Naive thymus-derived CD4-positive, alpha-beta T cell (primary cell): ENCODE measurements at regions of chr10 and their contacts with region 1.

Region 1: GRCh38 chr10:94439275-94439861 is 37.0 kb downstream of the TBC1D12 start:
- DNase-seq: no peak
- ATAC-seq: no peak
- H3K4me3 ChIP-seq: no peak overlapping the region
- H3K4me3 Mint-ChIP-seq: no peak overlapping the region
- H3K27ac ChIP-seq: no peak overlapping the region
- H3K27ac Mint-ChIP-seq: no peak overlapping the region
- H3K4me1 ChIP-seq: no peaks in the 10 kb centered on the region
- H3K4me1 Mint-ChIP-seq: no peaks in the 10 kb centered on the region
- H3K27me3 ChIP-seq: peaks cover 0 to 3% of the 10 kb centered on the region in 2 donors
- H3K27me3 Mint-ChIP-seq: peaks cover 7 to 29% (median 25%) of the 10 kb centered on the region in 5 donors

Region 2: DNA sequence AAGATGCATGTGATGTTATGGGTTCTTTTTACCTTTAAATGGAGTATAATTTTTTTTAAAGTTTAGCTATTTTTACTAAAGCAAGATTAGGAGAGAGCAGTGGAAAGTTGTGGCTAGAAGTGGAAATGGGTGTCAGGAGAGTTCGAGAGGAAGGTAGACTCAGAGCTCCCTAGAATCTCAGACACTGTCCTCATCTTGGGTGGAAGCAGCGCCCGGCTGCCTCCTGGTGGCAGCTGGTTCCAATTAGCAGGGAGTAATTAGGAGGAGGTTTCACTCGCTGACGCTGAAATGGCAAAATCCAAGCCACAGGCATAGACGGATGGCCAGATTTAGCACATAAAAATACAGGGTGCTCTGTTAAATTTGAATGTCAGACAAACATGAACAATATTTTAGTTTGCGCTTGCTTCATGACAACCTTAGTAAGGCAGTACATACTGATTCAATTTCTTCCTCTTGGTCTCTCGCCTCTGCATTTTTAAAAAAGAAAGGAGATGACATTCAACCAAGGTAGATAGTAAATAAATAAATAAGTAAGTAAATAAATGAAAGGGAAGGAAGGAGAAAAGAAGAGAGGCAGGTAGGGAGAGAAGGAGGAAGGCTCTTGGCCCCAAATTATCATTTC is 623.1 kb before region 1 on chr10:
- CTCF ChIA-PET with region 1: no interaction called
- POLR2A ChIA-PET with region 1: no interaction called
- intact Hi-C with region 1: loop called in 1 of 2 experiments (anchors 5 kb)
- DNase-seq: peak in 6 of 9 donors; percentile 2 to 22 (median 8)
- ATAC-seq: peak; percentile 57
- H3K4me3 ChIP-seq: no peak overlapping the region
- H3K4me3 Mint-ChIP-seq: no peak overlapping the region
- H3K27ac ChIP-seq: no peak overlapping the region
- H3K27ac Mint-ChIP-seq: no peak overlapping the region
- H3K4me1 ChIP-seq: no peaks in the 10 kb centered on the region
- H3K4me1 Mint-ChIP-seq: peaks cover 0 to 13% (median 8%) of the 10 kb centered on the region in 7 donors
- H3K27me3 ChIP-seq: peaks cover 0 to 4% of the 10 kb centered on the region in 2 donors
- H3K27me3 Mint-ChIP-seq: peaks cover 35 to 50% (median 45%) of the 10 kb centered on the region in 5 donors

Region 3: DNA sequence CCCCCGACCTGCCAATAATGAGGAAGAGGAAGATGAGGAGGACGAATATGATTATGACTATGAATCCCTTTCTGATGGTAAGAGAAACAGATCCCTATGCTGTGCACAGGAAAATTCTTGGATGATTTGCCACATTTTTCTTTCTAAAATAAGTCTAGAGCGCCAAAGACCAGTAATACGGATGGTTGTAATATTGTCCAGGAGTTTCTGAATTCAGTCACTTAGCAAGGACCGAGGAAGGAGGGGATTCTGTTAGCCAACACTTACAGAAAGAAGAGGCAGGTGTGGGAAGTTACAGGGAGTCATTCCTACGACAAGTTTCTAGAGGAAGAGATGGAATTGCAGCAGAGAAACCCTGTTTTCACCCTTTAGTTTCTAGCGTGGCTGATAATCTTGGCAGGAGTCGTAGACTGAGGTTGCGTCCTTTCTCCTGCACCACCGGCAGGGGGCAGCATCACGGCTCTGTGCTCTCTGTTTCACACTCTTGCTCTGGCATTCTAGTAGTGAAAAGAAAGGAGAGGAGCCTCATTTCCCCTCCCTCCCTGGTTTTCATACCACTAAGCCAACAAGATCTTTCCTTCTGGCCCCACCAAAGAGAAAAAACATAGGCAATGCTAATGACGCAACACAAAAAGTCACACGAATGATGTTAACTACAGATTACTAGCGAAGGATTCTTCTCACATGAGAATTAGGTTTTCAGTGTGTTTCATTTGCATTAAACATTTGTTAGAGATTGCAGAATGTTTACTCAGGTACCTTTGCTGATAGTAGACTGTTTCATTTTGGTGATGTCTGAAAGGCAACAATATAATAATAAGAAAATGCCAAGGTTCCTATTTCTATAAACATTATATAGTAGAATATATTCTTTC is 159.3 kb before region 1 on chr10:
- CTCF ChIA-PET with region 1: no interaction called
- POLR2A ChIA-PET with region 1: no interaction called
- intact Hi-C with region 1: loop called (anchors 1 kb)
- DNase-seq: peak; percentile 6 to 67 (median 35)
- ATAC-seq: peak; percentile 74
- H3K4me3 ChIP-seq: no peak overlapping the region
- H3K4me3 Mint-ChIP-seq: peak overlapping the region in 1 of 10 donors; percentile 42
- H3K27ac ChIP-seq: no peak overlapping the region
- H3K27ac Mint-ChIP-seq: no peak overlapping the region
- H3K4me1 ChIP-seq: no peaks in the 10 kb centered on the region
- H3K4me1 Mint-ChIP-seq: peaks cover 0 to 11% (median 6%) of the 10 kb centered on the region in 7 donors
- H3K27me3 ChIP-seq: no peaks in the 10 kb centered on the region
- H3K27me3 Mint-ChIP-seq: peaks cover 11 to 28% (median 22%) of the 10 kb centered on the region in 5 donors

Region 4: GRCh38 chr10:94878649-94879048 is 439.3 kb after region 1 on chr10:
- CTCF ChIA-PET with region 1: no interaction called
- POLR2A ChIA-PET with region 1: no interaction called
- intact Hi-C with region 1: no loop called
- DNase-seq: no peak
- ATAC-seq: no peak
- H3K4me3 ChIP-seq: no peak overlapping the region
- H3K4me3 Mint-ChIP-seq: no peak overlapping the region
- H3K27ac ChIP-seq: no peak overlapping the region
- H3K27ac Mint-ChIP-seq: no peak overlapping the region
- H3K4me1 ChIP-seq: no peaks in the 10 kb centered on the region
- H3K4me1 Mint-ChIP-seq: no peaks in the 10 kb centered on the region
- H3K27me3 ChIP-seq: no peaks in the 10 kb centered on the region
- H3K27me3 Mint-ChIP-seq: peaks cover 0 to 4% (median 0%) of the 10 kb centered on the region in 5 donors